CD4-positive, alpha-beta T cell (primary cell): ENCODE measurements at regions of chr3 and their contacts with region 1.

Region 1: DNA sequence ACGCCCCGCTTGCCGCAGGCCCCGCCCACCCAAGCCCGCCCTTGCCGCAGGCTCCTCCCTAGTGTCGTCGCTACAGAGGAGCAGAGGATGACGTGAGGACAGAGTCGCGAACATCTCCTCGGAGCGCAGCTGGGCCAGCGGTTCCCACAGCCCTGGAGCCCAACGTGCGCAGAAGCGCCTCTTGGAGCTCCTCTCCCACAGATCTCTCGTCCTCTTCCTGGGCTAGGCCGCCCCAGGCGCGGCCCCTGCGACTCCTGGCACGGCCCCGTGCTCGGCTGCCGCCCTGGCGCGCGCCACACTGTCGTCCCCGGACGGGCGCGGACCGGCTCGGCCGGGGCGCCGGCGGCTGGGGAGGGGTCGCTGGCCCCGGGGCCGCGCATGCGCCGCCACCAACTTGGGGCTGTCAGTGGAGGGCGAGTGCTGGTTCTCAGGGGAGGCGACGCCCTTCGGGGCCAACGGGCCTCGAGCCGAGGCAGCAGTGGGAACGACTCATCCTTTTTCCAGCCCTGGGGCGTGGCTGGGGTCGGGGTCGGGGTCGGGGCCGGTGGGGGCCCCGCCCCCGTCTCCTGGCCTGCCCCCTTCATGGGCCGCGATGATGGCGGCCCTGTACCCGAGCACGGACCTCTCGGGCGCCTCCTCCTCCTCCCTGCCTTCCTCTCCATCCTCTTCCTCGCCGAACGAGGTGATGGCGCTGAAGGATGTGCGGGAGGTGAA is at the start of gene TRPC1:
- DNase-seq: peak in 13 of 14 experiments; percentile 55 to 95 (median 71)
- ATAC-seq: peak; percentile 94
- H3K4me3 ChIP-seq: peak within 1 kb of the TSS; percentile 70
- H3K4me3 Mint-ChIP-seq: peak within 1 kb of the TSS; percentile 93
- H3K27ac ChIP-seq: no peak within 1 kb of the TSS
- H3K27ac Mint-ChIP-seq: peak within 1 kb of the TSS; percentile 85
- H3K4me1 ChIP-seq: peaks cover 12% of the 10 kb centered on the region
- H3K4me1 Mint-ChIP-seq: peaks cover 36% of the 10 kb centered on the region
- H3K27me3 ChIP-seq: no peaks in the 10 kb centered on the region
- H3K27me3 Mint-ChIP-seq: peaks cover 25% of the 10 kb centered on the region
- CTCF ChIP-seq: no peak
- total RNA-seq, gene TRPC1: 3.1 to 4.2 TPM

Region 2: DNA sequence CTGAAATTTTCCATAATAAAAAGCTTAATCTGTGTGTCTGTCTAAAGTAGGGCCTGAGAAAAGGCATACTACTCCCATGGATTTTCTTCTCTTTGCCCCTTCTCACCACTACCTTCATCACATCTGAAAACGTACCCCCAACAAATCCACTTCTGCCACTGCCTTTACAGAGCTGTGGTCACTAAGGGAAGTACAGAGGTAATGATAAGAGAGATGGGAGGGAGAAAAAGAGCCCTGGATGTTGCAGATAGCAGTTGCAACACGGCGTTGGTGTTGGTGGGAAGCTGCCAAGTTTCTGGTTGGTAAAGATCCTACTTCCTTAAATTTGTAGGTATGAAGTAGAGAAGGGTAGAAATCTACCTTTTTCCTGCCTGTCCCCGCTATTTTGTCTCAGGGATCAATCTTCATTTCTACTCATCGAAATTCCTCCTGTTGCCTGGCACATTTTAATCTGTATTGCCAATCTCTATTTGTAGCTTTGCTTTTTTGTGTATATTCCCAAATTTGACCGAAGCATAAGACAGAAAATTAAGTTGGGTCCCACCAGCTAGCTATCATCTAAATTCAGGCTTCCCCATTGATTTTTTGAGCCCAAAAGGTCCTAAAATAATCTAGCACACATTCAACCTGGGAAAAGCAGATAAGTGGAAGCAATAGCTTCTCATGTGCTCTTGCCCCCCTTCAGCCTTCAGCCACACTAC is 677.7 kb before region 1 on chr3:
- CTCF ChIA-PET with region 1: no interaction called
- POLR2A ChIA-PET with region 1: no interaction called
- intact Hi-C with region 1: no loop called
- DNase-seq: no peak
- ATAC-seq: no peak
- H3K4me3 ChIP-seq: no peak overlapping the region
- H3K4me3 Mint-ChIP-seq: no peak overlapping the region
- H3K27ac ChIP-seq: no peak overlapping the region
- H3K27ac Mint-ChIP-seq: no peak overlapping the region
- H3K4me1 ChIP-seq: no peaks in the 10 kb centered on the region
- H3K4me1 Mint-ChIP-seq: no peaks in the 10 kb centered on the region
- H3K27me3 ChIP-seq: no peaks in the 10 kb centered on the region
- H3K27me3 Mint-ChIP-seq: no peaks in the 10 kb centered on the region
- CTCF ChIP-seq: no peak

Region 3: GRCh38 chr3:142459929-142460328 is 264.2 kb before region 1 on chr3:
- CTCF ChIA-PET with region 1: no interaction called
- POLR2A ChIA-PET with region 1: no interaction called
- intact Hi-C with region 1: loop called in 1 of 2 experiments (anchors 10 kb)
- DNase-seq: no peak
- ATAC-seq: no peak
- H3K4me3 ChIP-seq: no peak overlapping the region
- H3K4me3 Mint-ChIP-seq: no peak overlapping the region
- H3K27ac ChIP-seq: no peak overlapping the region
- H3K27ac Mint-ChIP-seq: no peak overlapping the region
- H3K4me1 ChIP-seq: no peaks in the 10 kb centered on the region
- H3K4me1 Mint-ChIP-seq: no peaks in the 10 kb centered on the region
- H3K27me3 ChIP-seq: no peaks in the 10 kb centered on the region
- H3K27me3 Mint-ChIP-seq: no peaks in the 10 kb centered on the region
- CTCF ChIP-seq: no peak

Region 4: DNA sequence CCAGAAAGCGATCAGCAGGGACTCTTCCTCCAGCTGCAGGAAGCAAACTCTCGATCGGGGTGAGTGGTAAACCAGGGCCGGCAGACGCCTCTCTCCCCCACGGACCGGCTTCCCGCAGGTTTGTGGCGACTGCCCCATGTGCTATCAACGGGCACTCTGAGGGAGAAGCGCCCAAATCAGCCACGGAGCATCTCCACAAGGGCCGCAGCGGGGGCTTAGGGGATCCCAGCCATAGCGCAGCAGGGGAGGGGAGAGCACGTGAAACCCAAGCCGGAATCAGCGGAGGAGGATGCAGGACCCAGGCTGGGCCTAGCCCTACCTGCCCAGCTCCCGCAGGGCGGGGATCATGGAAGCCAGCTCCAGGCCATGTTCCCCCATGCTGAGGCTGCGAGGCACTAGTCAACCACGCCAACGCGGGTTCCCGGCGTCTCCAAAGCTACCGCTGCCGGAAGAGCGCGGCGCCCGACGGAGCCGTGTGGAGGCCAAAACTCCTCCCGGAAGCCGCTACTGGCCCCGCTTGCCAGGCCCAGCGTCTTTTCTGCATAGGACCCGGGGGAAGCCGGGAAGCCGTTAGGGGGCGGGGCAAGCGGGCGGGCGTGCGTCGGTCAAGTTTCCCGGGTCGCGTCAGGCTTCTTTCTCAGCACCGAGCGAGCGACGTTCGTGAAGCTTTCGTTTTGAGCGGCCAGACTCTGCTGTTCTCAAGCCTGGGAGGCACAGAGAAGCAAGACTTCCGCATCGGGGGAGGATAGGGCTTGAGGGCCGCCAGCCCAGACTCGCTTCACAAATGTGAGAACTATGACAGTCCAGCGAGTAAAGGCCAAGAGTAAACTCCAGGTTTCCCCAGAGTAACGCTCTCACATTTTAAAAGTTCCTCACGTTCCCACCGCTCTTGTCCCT is 145.6 kb before region 1 on chr3 and contains the start of gene ATR:
- CTCF ChIA-PET with region 1: no interaction called
- POLR2A ChIA-PET with region 1: interaction called, 16 read pairs
- intact Hi-C with region 1: loop called (anchors 1 to 5 kb)
- DNase-seq: peak; percentile 91 to 98 (median 96)
- ATAC-seq: peak; percentile 93
- H3K4me3 ChIP-seq: peak within 1 kb of the TSS; percentile 95
- H3K4me3 Mint-ChIP-seq: peak within 1 kb of the TSS; percentile 99
- H3K27ac ChIP-seq: peak within 1 kb of the TSS; percentile 90 to 93
- H3K27ac Mint-ChIP-seq: peak within 1 kb of the TSS; percentile 97
- H3K4me1 ChIP-seq: peaks cover 15% of the 10 kb centered on the region
- H3K4me1 Mint-ChIP-seq: peaks cover 64% of the 10 kb centered on the region
- H3K27me3 ChIP-seq: no peaks in the 10 kb centered on the region
- H3K27me3 Mint-ChIP-seq: peaks cover 6% of the 10 kb centered on the region
- CTCF ChIP-seq: no peak
- total RNA-seq, gene ATR: 29.0 to 29.5 TPM

Region 5: GRCh38 chr3:142595951-142596725 is 128.0 kb before region 1 on chr3 and contains the start of gene PLS1:
- CTCF ChIA-PET with region 1: no interaction called
- POLR2A ChIA-PET with region 1: interaction called, 4 read pairs
- intact Hi-C with region 1: loop called in 1 of 2 experiments (anchors 5 kb)
- DNase-seq: peak; percentile 68 to 91 (median 82)
- ATAC-seq: peak; percentile 91
- H3K4me3 ChIP-seq: peak within 1 kb of the TSS; percentile 62
- H3K4me3 Mint-ChIP-seq: peak within 1 kb of the TSS; percentile 97
- H3K27ac ChIP-seq: no peak within 1 kb of the TSS
- H3K27ac Mint-ChIP-seq: peak within 1 kb of the TSS; percentile 53
- H3K4me1 ChIP-seq: peaks cover 13% of the 10 kb centered on the region
- H3K4me1 Mint-ChIP-seq: peaks cover 18% of the 10 kb centered on the region
- H3K27me3 ChIP-seq: no peaks in the 10 kb centered on the region
- H3K27me3 Mint-ChIP-seq: peaks cover 6% of the 10 kb centered on the region
- CTCF ChIP-seq: no peak
- total RNA-seq, gene PLS1: 0.63 to 0.92 TPM

Region 6: DNA sequence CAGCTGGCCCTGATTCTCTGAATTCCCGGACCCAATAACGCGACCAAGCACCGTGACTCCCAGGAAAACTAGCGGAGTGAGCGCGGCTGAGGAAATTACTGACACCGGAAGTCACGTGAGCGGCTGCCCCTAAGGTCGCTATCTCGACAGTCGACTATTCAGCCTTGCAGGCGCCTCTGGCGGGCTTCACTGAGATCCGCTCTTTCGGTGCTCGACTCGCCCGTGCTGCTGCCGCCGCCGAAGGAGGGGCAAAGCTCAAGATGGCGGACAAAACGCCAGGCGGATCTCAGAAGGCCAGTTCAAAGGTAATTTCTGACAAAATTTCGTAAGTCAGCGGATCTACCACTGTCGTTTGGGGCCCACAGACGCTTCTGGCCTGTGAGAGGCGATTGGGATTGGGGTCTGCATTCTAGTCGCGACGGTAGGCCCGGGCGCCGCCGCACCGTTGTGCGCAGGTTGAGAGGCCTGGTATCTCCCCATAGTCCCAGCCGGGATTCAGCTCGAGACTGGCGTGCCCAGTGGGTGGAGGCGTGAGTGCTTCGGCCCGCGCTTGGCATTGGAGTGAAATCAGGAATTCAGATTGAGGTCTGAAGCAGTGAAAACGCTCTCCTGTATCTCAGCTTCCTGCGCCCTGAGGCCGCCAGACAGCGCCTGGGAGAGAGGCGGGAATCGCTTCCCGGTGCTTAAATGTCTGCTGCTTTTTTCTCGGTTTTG is 277.4 kb after region 1 on chr3 and contains the start of gene U2SURP:
- CTCF ChIA-PET with region 1: no interaction called
- POLR2A ChIA-PET with region 1: interaction called, 17 read pairs
- intact Hi-C with region 1: loop called in 1 of 2 experiments (anchors 5 kb)
- DNase-seq: peak; percentile 83 to 96 (median 86)
- ATAC-seq: peak; percentile 93
- H3K4me3 ChIP-seq: peak within 1 kb of the TSS; percentile 89
- H3K4me3 Mint-ChIP-seq: peak within 1 kb of the TSS; percentile 97
- H3K27ac ChIP-seq: peak within 1 kb of the TSS; percentile 93 to 94
- H3K27ac Mint-ChIP-seq: peak within 1 kb of the TSS; percentile 97
- H3K4me1 ChIP-seq: peaks cover 23% of the 10 kb centered on the region
- H3K4me1 Mint-ChIP-seq: peaks cover 55% of the 10 kb centered on the region
- H3K27me3 ChIP-seq: peaks cover 0 to 4% of the 10 kb centered on the region in 2 experiments
- H3K27me3 Mint-ChIP-seq: peaks cover 14% of the 10 kb centered on the region
- CTCF ChIP-seq: no peak
- total RNA-seq, gene U2SURP: 164 to 179 TPM